ENCODE measurements at regions of chrX and their contacts with region 1.

Region 1: GRCh38 chrX:137313627-137314026 is 252.3 kb upstream of the ZIC3 start:
- DNase-seq: no peak

Region 2: GRCh38 chrX:137263374-137263773 is 50.3 kb before region 1 on chrX:
- intact Hi-C with region 1: loop called (anchors 2 kb)
- DNase-seq: no peak